ENCODE measurements at regions of chr6 and their contacts with region 1.

Region 1: GRCh38 chr6:106560996-106561685 is 68.2 kb downstream of the RTN4IP1 start:
- DNase-seq: no peak
- H3K4me3 ChIP-seq: no peak overlapping the region
- H3K27ac ChIP-seq: peak overlapping the region; percentile 66 to 70
- H3K4me1 ChIP-seq: no peaks in the 10 kb centered on the region
- H3K27me3 ChIP-seq: no peaks in the 10 kb centered on the region
- CTCF ChIP-seq: no peak
- POLR2A ChIP-seq: no peak

Region 2: GRCh38 chr6:106444777-106445507 is 116.2 kb before region 1 on chr6:
- intact Hi-C with region 1: loop called (anchors 10 kb)
- DNase-seq: no peak
- H3K4me3 ChIP-seq: no peak overlapping the region
- H3K27ac ChIP-seq: no peak overlapping the region
- H3K4me1 ChIP-seq: no peaks in the 10 kb centered on the region
- H3K27me3 ChIP-seq: no peaks in the 10 kb centered on the region
- CTCF ChIP-seq: peak; percentile 61 to 86 (median 72)
- POLR2A ChIP-seq: no peak

Measured in breast epithelium (tissue), 4 donors.